Sciatic nerve (tissue), 2 donors: ENCODE measurements at regions of chr11 and their contacts with region 1.

Region 1: DNA sequence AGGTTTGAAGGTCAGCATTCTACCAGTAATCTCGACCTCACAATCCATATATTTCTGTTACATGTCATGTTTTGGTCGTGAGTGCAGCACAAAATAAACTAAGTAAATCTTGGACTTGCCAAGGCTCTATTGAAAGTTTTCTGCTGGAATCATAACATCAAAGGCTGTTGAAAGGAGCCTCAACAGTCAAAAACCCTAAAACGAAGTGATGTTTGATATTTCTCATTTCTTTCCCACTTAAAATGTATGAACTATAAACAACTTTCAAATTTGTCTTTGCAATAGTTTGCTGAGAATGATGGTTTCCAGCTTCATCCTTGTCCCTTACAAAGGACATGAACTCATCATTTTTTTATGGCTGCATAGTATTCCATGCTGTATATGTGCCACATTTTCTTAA is 1118.5 kb downstream of the LRRC4C start:
- DNase-seq: no peak
- ATAC-seq: no peak

Region 2: GRCh38 chr11:38593649-38594048 is 1747.3 kb before region 1 on chr11:
- intact Hi-C with region 1: no loop called
- DNase-seq: no peak
- ATAC-seq: no peak

Region 3: GRCh38 chr11:40274017-40274416 is 66.9 kb before region 1 on chr11:
- intact Hi-C with region 1: no loop called
- DNase-seq: no peak
- ATAC-seq: peak; percentile 61

Region 4: GRCh38 chr11:40370821-40371616 is 30.1 kb after region 1 on chr11:
- intact Hi-C with region 1: loop called (anchors 1 kb)
- DNase-seq: no peak
- ATAC-seq: no peak